ENCODE measurements at regions of chr15 and their contacts with region 1.

Region 1: DNA sequence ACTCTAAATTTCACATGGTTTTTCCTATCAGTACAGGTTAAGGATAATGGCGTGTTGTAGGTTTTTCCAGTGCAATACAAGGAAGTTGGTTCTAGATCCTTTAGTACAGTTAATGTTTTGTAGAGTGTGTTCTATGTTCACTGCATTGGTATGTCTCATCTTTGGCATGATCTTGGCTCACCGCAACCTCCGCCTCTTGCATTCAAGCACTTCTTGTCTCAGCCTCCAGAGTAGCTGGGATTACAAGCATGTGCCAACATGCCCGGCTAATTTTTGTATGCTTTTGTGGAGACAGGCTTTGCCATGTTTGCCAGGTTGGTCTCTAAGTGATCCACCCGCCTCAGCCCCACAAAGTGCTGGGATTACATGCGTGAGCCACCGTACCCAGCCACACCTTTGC is 30.4 kb downstream of the SNRPN start:
- DNase-seq: no peak
- ATAC-seq: no peak

Region 2: DNA sequence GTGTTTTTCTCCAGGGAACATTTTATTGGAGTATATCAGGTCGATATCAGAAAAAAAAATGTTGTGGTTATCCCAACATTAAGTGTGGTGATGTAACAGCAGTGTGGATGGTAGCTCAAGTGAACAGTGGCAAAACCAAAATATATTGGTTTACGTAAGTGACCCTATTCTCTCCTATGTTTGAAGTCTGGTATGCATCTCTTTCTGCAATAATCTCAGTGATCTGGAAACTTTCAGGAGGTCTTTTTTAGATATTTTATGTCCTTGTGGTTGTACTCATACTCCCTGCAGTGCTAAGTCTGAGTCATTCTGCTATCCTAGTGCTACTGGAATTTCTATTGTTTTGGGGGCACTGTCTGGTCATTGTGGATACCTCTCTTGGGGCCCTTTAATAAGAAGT is 107.4 kb after region 1 on chr15:
- intact Hi-C with region 1: loop called in 1 of 2 experiments (anchors 10 kb)
- DNase-seq: no peak
- ATAC-seq: no peak

Region 3: GRCh38 chr15:25220834-25221233 is 235.6 kb after region 1 on chr15:
- intact Hi-C with region 1: no loop called
- DNase-seq: no peak
- ATAC-seq: no peak